Mammary epithelial cell (primary cell): ENCODE measurements at regions of chr5 and their contacts with region 1.

Region 1: DNA sequence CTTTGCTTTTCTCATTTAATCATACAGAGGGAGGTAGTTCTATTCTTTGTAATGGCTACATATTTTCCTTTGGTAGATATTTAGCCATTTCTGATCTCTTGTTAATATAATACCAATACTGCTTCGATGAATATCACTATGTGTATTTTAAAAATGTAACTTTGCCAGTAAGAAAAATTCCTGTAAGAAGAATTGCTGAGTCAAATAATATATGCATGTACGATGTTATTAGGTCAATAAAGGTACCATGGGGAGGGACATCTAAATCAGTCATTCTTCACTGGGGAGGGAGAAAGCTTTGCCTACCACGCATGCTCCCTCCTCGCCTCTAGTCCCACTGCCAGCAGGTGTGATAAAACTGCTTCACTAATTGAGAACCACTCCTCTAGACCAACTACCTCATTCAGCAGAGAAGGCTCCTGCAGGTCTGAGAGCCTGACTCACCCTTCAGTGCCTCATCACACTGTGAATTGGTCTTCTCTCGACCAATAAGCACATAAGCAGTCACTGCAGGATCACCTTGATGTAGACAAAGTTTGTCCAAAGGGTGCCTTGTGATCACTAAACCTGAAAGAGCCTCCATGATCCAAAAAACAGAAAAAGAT is 56.1 kb upstream of the TBCA start:
- DNase-seq: peak; percentile 9
- H3K4me3 ChIP-seq: no peak overlapping the region
- H3K27ac ChIP-seq: no peak overlapping the region
- H3K4me1 ChIP-seq: no peaks in the 10 kb centered on the region
- H3K27me3 ChIP-seq: no peaks in the 10 kb centered on the region
- CTCF ChIP-seq: no peak

Region 2: GRCh38 chr5:77798456-77798855 is 33.8 kb before region 1 on chr5:
- CTCF ChIA-PET with region 1: no interaction called
- dilution Hi-C with region 1: no loop called
- in situ Hi-C with region 1: no loop called
- intact Hi-C with region 1: no loop called
- DNase-seq: no peak
- H3K4me3 ChIP-seq: no peak overlapping the region
- H3K27ac ChIP-seq: no peak overlapping the region
- H3K4me1 ChIP-seq: no peaks in the 10 kb centered on the region
- H3K27me3 ChIP-seq: peaks cover 12% of the 10 kb centered on the region
- CTCF ChIP-seq: no peak

Region 3: DNA sequence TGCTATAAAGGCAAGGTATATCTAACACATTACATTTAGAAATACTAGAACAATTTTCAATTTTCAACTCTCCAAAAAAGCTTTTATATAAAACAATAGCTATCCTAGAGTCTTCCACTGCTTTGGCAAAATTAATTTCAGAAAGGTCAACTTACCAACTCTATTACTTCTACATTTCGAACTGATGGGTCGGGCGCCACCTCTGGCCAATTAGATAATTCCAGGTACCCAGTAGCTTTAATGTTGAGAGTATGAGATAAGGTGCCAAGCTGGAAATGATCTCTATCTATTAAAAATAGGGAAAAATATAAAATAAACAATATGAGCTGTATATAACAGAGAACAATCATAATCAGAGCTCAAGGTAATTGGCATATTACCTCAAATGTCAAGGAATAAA is 295.6 kb after region 1 on chr5:
- CTCF ChIA-PET with region 1: interaction called, 10 read pairs
- dilution Hi-C with region 1: no loop called
- in situ Hi-C with region 1: no loop called
- intact Hi-C with region 1: no loop called
- DNase-seq: no peak
- H3K4me3 ChIP-seq: no peak overlapping the region
- H3K27ac ChIP-seq: no peak overlapping the region
- H3K4me1 ChIP-seq: no peaks in the 10 kb centered on the region
- H3K27me3 ChIP-seq: no peaks in the 10 kb centered on the region
- CTCF ChIP-seq: peak; percentile 17 to 33